ENCODE measurements at regions of chr4 and their contacts with region 1.

Region 1: DNA sequence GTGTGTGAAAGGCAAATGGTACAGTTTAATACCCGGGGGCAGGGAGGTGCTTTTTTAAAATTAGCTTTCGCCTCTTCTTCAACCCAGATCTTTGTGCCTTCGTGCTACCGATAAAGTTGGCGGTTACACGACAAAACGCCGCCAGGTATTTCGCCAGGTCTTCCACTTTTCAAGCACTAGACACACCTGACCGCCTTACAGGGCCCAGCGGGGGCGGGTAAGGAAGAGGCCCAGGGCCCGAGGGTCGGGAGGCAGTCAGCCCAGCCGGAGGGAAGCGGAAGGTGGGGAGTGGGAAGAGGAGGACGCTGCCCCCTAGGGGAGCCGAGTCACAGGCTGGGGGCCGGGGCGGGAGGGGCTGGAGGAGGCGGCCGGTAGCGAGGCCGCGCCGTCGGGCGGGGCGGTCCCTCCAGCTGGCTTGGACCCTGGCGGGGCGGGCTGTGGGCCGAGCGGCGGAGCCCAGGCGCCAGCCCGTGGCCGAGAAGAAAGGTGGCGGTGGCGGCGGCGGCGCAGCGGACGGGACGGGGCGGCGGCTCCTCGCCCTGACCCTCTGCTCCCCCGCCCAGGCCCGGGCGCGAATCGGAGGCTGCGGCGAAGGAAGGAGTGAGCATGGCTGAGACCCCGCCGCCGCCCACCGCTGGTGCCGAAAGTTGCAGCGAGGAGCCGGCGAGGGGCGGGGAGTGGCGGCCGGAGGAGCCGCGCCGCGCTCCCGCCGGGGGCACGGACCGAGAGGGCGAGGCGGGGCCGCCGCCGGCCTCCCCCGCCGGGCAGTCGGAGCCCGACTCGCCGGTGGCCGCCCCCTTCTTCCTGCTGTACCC is 16.2 kb downstream of the UTP3 start:
- DNase-seq: peak; percentile 88
- H3K4me3 ChIP-seq: peak overlapping the region; percentile 82 to 99 (median 91)
- H3K27ac ChIP-seq: peak overlapping the region; percentile 93 to 99 (median 98)
- H3K4me1 ChIP-seq: peaks cover 21 to 31% (median 25%) of the 10 kb centered on the region in 4 donors
- H3K27me3 ChIP-seq: no peaks in the 10 kb centered on the region
- CTCF ChIP-seq: peak; percentile 13 to 43 (median 29)
- EP300 ChIP-seq: no peak
- POLR2A ChIP-seq: peak; percentile 13

Region 2: DNA sequence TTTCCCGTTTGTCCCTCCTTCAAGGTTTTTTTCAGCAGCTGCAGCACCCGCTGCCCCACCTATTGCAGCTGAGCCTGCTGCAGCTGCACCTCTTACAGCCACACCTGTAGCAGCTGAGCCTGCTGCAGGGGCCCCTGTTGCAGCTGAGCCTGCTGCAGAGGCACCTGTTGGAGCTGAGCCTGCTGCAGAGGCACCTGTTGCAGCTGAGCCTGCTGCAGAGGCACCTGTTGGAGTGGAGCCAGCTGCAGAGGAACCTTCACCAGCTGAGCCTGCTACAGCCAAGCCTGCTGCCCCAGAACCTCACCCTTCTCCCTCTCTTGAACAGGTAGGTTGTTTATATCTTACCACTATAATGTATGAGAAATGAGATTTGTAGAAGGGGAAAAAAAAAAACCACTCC is 546.0 kb before region 1 on chr4:
- in situ Hi-C with region 1: no loop called
- intact Hi-C with region 1: no loop called
- DNase-seq: no peak
- H3K4me3 ChIP-seq: no peak overlapping the region
- H3K27ac ChIP-seq: no peak overlapping the region
- H3K4me1 ChIP-seq: no peaks in the 10 kb centered on the region
- H3K27me3 ChIP-seq: no peaks in the 10 kb centered on the region
- CTCF ChIP-seq: no peak
- EP300 ChIP-seq: no peak
- POLR2A ChIP-seq: no peak

Region 3: DNA sequence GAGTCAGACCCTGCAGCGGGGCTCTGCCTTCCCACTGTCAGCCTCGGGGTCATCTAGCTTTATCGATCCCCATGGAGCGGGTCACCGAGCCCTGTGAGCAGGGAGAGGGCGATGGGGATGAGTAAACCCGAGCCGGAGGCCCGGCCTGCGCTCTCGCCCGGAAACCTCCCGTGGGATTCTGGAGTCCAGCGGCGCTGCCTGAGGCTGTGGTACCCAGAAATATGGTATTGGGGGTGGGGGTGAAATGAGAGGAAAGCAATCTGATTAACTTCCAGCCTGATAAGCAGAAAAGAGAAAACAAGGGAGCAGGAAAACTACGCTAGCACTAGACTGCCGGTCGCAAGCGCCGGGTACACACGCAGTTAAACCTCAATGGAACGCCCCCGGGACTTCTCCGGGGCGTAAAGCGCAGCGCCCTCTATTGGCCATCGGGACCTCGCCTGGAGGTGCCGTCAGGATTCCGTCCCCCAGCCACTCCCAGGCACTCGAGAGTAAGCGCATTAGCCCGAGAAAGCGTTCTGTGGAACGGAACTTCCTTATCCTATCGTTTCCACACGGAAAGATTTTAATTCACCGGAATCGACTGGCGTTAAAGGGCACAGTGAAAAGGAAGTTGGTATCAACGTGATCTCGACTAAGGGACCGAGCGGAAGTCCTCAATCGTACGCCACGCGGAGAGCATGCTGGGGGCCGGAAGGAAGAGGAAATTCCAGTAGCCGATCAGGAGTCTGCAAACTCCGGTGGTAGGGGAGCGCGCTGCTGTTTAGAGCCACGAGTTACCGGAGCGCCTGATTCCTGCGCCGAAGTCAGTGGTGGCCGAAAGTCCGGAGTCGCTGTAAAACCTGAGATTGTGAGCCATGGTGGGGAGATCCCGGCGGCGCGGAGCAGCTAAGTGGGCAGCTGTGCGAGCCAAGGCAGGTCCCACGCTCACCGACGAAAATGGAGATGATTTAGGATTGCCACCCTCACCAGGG is 16.4 kb before region 1 on chr4 and contains the start of gene UTP3:
- in situ Hi-C with region 1: no loop called
- intact Hi-C with region 1: loop called (anchors 2 kb)
- DNase-seq: peak; percentile 96
- H3K4me3 ChIP-seq: peak within 1 kb of the TSS; percentile 76 to 94 (median 88)
- H3K27ac ChIP-seq: peak within 1 kb of the TSS; percentile 94 to 98 (median 95)
- H3K4me1 ChIP-seq: peaks cover 17 to 35% (median 31%) of the 10 kb centered on the region in 4 donors
- H3K27me3 ChIP-seq: no peaks in the 10 kb centered on the region
- CTCF ChIP-seq: peak; percentile 85 to 97 (median 96)
- EP300 ChIP-seq: no peak
- POLR2A ChIP-seq: peak; percentile 72
- total RNA-seq, gene UTP3: 3.7 to 23.1 (median 19.4) TPM